IMR-90 (cell line): ENCODE measurements at regions of chr10 and their contacts with region 1.

Region 1: DNA sequence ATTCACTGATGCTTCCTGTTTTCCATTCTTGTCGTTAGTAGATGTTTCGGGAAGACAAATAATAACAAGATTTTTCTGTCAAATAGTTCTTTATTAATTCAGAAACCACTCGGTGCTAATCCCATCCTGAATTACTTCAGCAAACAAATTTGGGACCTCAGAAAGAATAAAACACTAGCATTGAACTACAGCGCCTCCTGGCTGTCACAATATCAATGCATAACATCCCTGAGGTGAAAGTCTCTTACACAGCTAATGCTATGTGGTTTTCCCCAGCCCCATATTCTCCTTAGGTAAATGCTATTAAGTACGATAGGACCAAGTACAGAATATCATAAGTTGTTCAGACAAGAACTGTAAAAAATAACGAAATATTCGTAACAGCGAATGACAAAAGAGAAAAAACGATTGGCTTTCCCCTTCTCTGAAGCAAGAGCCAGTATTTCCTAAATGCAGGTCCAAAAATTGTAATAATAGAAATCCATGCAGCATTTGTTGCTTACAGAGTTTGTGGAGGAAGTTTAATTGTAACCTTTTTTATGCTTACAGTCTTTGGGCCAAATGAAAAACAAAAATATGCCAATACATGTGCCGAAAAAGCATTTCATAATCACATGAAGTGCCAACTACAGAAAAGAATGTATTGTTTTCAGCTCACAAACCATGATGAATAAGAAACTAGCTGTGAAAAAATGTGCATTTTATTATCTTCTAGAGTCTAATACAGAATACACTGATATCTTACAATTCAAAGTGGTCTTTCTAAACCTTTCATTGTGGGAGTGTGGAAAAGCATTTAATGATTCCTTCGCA is 47.3 kb downstream of the MYPN start:
- DNase-seq: peak; percentile 76
- ATAC-seq: peak; percentile 13
- H3K4me3 ChIP-seq: no peak overlapping the region
- H3K27ac ChIP-seq: peak overlapping the region; percentile 30; the same call in 1 of the 2 replicates
- H3K4me1 ChIP-seq: peaks cover 16% of the 10 kb centered on the region
- H3K27me3 ChIP-seq: no peaks in the 10 kb centered on the region
- CTCF ChIP-seq: peak; percentile 90
- POLR2A ChIP-seq: 0 out of 2 replicates have a peak, but pooled peaks have one; percentile 31
- RAD21 ChIP-seq: peak; percentile 91

Region 2: DNA sequence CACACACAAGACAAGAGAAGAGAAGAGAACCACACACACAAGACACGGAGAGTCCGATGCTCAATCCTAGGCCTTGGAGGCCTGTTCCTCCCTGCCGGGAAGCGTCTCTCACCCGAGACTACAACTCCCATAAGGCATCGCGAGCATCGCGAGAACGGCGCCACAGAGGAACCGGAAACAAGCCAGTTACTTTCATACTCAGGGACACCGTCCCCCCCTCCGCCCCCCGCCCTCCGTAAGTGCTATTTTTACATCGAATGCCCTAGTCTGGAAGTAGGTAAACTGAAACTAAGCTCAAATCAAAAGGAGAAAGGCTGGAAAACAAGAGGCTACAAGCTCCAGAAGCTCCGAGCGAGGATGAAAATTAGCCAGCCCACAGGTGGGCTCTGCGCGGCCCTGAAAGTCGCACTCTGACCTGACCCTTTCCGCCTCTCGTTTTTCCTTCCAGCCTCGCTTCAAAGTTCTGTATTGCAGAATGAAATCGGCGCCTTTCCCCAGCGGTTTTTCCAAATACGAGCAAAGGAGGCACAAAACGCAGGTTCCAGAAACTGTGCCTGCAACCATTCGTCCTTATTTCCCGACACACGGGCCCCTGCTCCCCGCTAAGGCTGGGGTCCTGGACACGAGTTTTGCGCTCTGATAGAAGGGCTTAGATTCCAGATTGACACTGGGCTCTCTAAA is 307.1 kb before region 1 on chr10:
- CTCF ChIA-PET with region 1: no interaction called
- POLR2A ChIA-PET with region 1: no interaction called
- dilution Hi-C with region 1: no loop called
- in situ Hi-C with region 1: no loop called
- intact Hi-C with region 1: loop called (anchors 2 kb)
- DNase-seq: peak; percentile 95
- ATAC-seq: peak; percentile 98
- H3K4me3 ChIP-seq: peak overlapping the region; percentile 61
- H3K27ac ChIP-seq: peak overlapping the region; percentile 87
- H3K4me1 ChIP-seq: no peaks in the 10 kb centered on the region
- H3K27me3 ChIP-seq: no peaks in the 10 kb centered on the region
- CTCF ChIP-seq: no peak
- POLR2A ChIP-seq: no peak
- RAD21 ChIP-seq: no peak

Region 3: DNA sequence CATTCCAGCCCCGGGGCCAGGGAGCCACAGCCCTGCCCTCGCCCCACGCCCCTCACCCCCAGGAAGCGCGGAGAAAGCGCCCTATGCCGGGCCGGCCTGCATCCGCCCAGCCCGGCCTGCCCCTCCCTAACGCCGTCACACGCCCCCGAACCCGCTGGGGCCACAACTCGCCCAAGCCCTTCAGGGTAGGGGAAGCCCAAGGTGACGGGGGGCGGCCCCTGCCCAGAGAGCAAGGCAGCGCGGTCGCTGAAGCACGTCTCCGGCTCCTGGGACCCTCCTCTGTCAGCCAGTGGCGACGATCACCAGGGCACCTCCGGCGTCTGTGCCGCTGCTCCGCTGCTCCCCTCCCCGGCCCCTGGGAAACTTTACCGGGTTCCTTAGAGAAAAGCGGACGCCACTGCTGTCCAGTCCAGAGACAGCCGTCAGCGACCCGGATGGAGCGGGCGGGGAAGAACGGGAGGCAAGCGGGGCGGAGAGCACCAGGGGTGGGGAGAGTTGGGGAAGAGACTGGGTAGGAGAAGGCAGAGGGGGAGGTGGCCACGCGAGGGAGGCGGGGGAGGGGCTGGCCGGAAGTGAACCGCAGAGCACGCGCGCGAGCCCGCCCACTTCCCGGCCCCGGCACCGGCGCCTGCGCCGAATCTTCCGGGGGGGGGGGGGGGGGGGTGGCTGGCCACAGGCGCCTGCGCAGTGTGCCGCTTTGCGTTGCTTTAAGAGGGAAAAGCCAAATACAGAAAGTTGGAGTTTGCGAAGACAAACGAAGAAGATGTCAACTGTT is 81.6 kb before region 1 on chr10 and contains the start of gene HERC4:
- CTCF ChIA-PET with region 1: interaction called, 6 read pairs
- POLR2A ChIA-PET with region 1: no interaction called
- dilution Hi-C with region 1: no loop called
- in situ Hi-C with region 1: no loop called
- intact Hi-C with region 1: loop called (anchors 2 kb)
- DNase-seq: peak; percentile 92
- ATAC-seq: peak; percentile 94
- H3K4me3 ChIP-seq: peak within 1 kb of the TSS; percentile 92
- H3K27ac ChIP-seq: peak within 1 kb of the TSS; percentile 98
- H3K4me1 ChIP-seq: peaks cover 4% of the 10 kb centered on the region
- H3K27me3 ChIP-seq: no peaks in the 10 kb centered on the region
- CTCF ChIP-seq: no peak
- POLR2A ChIP-seq: peak; percentile 92
- RAD21 ChIP-seq: no peak
- total RNA-seq, gene HERC4: 92.8 and 177 TPM in 2 replicates

Region 4: DNA sequence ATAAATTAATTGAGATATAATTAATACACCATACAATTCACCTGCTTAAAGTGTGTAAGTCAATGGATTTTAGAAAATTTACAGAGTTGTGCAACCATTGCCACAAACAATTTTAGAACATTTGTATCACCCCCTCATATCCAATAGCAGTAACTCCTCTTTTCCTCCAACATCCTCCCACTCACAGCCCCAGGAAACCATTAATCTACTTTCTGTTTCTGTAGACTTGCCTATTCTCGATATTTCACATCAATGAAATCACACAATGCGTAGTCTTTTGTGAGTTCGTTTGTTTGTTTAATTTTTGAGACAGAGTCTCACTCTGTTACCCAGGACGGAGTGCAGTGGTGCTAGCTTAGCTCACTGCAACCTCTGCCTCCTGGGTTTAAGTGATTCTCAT is 67.8 kb before region 1 on chr10:
- CTCF ChIA-PET with region 1: interaction called, 40 read pairs
- POLR2A ChIA-PET with region 1: no interaction called
- dilution Hi-C with region 1: no loop called
- in situ Hi-C with region 1: loop called (anchors 5 kb)
- intact Hi-C with region 1: loop called (anchors 1 kb)
- DNase-seq: peak; percentile 87
- ATAC-seq: peak; percentile 15
- H3K4me3 ChIP-seq: peak overlapping the region; percentile 28; the same call in 1 of the 2 replicates
- H3K27ac ChIP-seq: peak overlapping the region; percentile 19
- H3K4me1 ChIP-seq: peaks cover 15% of the 10 kb centered on the region
- H3K27me3 ChIP-seq: no peaks in the 10 kb centered on the region
- CTCF ChIP-seq: no peak
- POLR2A ChIP-seq: no peak
- RAD21 ChIP-seq: no peak

Region 5: GRCh38 chr10:68135922-68136718 is 20.5 kb before region 1 on chr10:
- CTCF ChIA-PET with region 1: interaction called, 3 read pairs
- POLR2A ChIA-PET with region 1: no interaction called
- dilution Hi-C with region 1: no loop called
- in situ Hi-C with region 1: no loop called
- intact Hi-C with region 1: loop called (anchors 1 kb)
- DNase-seq: peak; percentile 92
- ATAC-seq: peak; percentile 66
- H3K4me3 ChIP-seq: peak overlapping the region; percentile 23; the same call in 1 of the 2 replicates
- H3K27ac ChIP-seq: peak overlapping the region; percentile 92
- H3K4me1 ChIP-seq: peaks cover 22% of the 10 kb centered on the region
- H3K27me3 ChIP-seq: no peaks in the 10 kb centered on the region
- CTCF ChIP-seq: no peak
- POLR2A ChIP-seq: peak; percentile 68
- RAD21 ChIP-seq: no peak

Region 6: GRCh38 chr10:68331455-68332258 is 175.1 kb after region 1 on chr10 and contains the start of gene HNRNPH3:
- CTCF ChIA-PET with region 1: no interaction called
- POLR2A ChIA-PET with region 1: interaction called, 13 read pairs
- dilution Hi-C with region 1: no loop called
- in situ Hi-C with region 1: no loop called
- intact Hi-C with region 1: no loop called
- DNase-seq: peak; percentile 97
- ATAC-seq: peak; percentile 86
- H3K4me3 ChIP-seq: peak within 1 kb of the TSS; percentile 98
- H3K27ac ChIP-seq: peak within 1 kb of the TSS; percentile 97
- H3K4me1 ChIP-seq: peaks cover 12% of the 10 kb centered on the region
- H3K27me3 ChIP-seq: no peaks in the 10 kb centered on the region
- CTCF ChIP-seq: no peak
- POLR2A ChIP-seq: peak; percentile 99
- RAD21 ChIP-seq: no peak
- total RNA-seq, gene HNRNPH3: 10.6 and 23.6 TPM in 2 replicates